ENCODE measurements at regions of chr10 and their contacts with region 1.

Region 1: GRCh38 chr10:12264204-12264940 is 68.4 kb downstream of the CDC123 start:
- DNase-seq: peak; percentile 62
- H3K4me3 Mint-ChIP-seq: peak overlapping the region; percentile 62
- H3K27ac Mint-ChIP-seq: peak overlapping the region; percentile 40
- H3K4me1 Mint-ChIP-seq: peaks cover 8% of the 10 kb centered on the region
- H3K27me3 Mint-ChIP-seq: no peaks in the 10 kb centered on the region
- CTCF ChIP-seq: peak; percentile 90

Region 2: GRCh38 chr10:12348870-12349628 is 84.7 kb after region 1 on chr10 and contains the start of gene CAMK1D:
- CTCF ChIA-PET with region 1: interaction called, 3 read pairs
- POLR2A ChIA-PET with region 1: no interaction called
- intact Hi-C with region 1: loop called (anchors 1 kb)
- DNase-seq: peak; percentile 55
- H3K4me3 Mint-ChIP-seq: peak within 1 kb of the TSS; percentile 88
- H3K27ac Mint-ChIP-seq: no peak within 1 kb of the TSS
- H3K4me1 Mint-ChIP-seq: peaks cover 10% of the 10 kb centered on the region
- H3K27me3 Mint-ChIP-seq: peaks cover 15% of the 10 kb centered on the region
- CTCF ChIP-seq: peak; percentile 35
- total RNA-seq, gene CAMK1D: 1.7 and 3.3 TPM in 2 replicates

Region 3: GRCh38 chr10:13056456-13057077 is 792.2 kb after region 1 on chr10:
- CTCF ChIA-PET with region 1: interaction called, 6 read pairs
- POLR2A ChIA-PET with region 1: no interaction called
- intact Hi-C with region 1: loop called (anchors 5 kb)
- DNase-seq: peak; percentile 41
- H3K4me3 Mint-ChIP-seq: no peak overlapping the region
- H3K27ac Mint-ChIP-seq: no peak overlapping the region
- H3K4me1 Mint-ChIP-seq: no peaks in the 10 kb centered on the region
- H3K27me3 Mint-ChIP-seq: peaks cover 4% of the 10 kb centered on the region
- CTCF ChIP-seq: peak; percentile 38

Region 4: DNA sequence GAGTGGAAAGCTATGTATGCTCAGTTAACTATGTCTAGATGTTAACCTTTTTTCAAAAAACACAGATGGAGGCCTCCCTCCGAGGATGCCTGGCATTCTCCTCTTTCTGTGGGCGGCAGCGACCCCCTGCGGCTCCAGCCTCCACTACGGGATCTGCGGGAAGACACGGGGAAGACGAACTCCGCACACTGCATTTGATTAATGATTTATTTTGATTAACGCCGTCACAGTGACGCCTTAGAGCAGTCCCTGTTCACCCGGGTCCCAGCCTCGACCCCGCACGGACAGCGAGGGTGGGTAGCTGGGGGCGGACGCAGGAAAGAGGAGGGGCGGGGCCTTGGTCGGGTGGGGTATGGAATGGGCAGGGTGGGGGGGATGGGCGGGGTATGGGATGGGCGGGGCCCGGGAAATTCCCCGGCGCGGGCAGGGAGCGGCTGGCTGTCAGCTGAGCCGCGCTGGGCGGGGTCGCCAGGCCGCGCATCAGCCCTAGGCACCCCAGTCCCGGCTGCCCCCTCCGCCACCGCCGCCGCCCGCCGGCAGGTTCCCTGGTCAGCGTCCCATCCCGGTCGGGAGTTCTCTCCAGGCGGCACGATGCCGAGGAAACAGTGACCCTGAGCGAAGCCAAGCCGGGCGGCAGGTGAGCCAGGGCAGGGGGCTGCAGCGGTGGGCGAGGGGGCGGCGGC is 835.4 kb after region 1 on chr10 and contains the start of gene OPTN:
- CTCF ChIA-PET with region 1: interaction called, 3 read pairs
- POLR2A ChIA-PET with region 1: interaction called, 3 read pairs
- intact Hi-C with region 1: loop called (anchors 1 kb)
- DNase-seq: peak; percentile 81
- H3K4me3 Mint-ChIP-seq: peak within 1 kb of the TSS; percentile 83
- H3K27ac Mint-ChIP-seq: peak within 1 kb of the TSS; percentile 87
- H3K4me1 Mint-ChIP-seq: peaks cover 26% of the 10 kb centered on the region
- H3K27me3 Mint-ChIP-seq: no peaks in the 10 kb centered on the region
- CTCF ChIP-seq: peak; percentile 75
- total RNA-seq, gene OPTN: 79.6 and 109 TPM in 2 replicates